Upper lobe of right lung (tissue), 1 donor: ENCODE measurements at regions of chr12 and their contacts with region 1.

Region 1: DNA sequence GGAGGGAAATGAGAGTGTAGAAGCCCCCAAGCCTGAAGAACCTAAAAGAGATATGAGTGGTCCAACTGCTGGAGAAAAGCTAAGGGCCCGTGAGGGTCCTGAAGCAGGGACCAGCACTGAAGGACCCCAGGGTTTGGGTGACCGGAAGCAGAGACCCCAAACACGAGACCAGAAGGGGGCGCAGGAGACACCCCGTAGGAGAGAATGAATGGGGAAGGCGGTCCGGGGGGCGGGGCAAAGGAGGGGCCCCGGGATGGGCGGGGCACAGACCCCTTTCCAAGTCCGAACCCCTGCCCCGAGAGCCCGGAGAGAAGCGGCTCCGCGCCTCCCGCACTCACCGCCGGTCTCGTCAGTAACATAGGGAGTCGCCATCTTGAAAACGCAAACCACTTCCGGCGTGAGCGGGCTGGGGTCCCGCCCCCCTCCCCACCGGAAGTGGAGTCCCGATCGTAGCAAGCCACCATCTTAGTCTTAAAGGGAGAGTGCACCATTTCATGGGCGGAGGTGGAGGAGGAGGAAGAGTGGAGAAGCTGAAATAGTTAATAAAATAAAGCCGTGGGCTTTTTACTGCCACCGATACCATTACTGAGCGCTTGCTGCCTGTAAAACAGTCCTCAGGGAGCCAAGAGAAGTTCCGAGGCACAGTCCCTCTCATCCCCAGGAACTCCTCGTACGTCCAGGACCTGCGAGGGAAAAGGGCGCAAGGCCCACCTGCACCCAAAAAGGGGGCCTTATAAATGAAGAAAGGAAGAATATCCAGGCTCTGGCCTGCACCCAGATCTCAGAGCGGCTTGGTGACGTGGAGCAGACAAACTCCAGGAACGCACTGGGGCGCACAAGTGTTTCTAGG is 731 bp downstream of the PYM1 start:
- DNase-seq: peak; percentile 92
- ATAC-seq: peak; percentile 88
- H3K4me3 ChIP-seq: peak overlapping the region; percentile 97
- H3K27ac ChIP-seq: peak overlapping the region; percentile 98
- H3K4me1 ChIP-seq: peaks cover 38% of the 10 kb centered on the region
- H3K27me3 ChIP-seq: no peaks in the 10 kb centered on the region
- CTCF ChIP-seq: peak; percentile 61

Region 2: GRCh38 chr12:55829967-55830600 is 96.9 kb before region 1 on chr12:
- intact Hi-C with region 1: loop called (anchors 10 kb)
- DNase-seq: peak; percentile 84
- ATAC-seq: peak; percentile 39
- H3K4me3 ChIP-seq: peak overlapping the region; percentile 82
- H3K27ac ChIP-seq: peak overlapping the region; percentile 90
- H3K4me1 ChIP-seq: peaks cover 46% of the 10 kb centered on the region
- H3K27me3 ChIP-seq: no peaks in the 10 kb centered on the region
- CTCF ChIP-seq: no peak

Region 3: DNA sequence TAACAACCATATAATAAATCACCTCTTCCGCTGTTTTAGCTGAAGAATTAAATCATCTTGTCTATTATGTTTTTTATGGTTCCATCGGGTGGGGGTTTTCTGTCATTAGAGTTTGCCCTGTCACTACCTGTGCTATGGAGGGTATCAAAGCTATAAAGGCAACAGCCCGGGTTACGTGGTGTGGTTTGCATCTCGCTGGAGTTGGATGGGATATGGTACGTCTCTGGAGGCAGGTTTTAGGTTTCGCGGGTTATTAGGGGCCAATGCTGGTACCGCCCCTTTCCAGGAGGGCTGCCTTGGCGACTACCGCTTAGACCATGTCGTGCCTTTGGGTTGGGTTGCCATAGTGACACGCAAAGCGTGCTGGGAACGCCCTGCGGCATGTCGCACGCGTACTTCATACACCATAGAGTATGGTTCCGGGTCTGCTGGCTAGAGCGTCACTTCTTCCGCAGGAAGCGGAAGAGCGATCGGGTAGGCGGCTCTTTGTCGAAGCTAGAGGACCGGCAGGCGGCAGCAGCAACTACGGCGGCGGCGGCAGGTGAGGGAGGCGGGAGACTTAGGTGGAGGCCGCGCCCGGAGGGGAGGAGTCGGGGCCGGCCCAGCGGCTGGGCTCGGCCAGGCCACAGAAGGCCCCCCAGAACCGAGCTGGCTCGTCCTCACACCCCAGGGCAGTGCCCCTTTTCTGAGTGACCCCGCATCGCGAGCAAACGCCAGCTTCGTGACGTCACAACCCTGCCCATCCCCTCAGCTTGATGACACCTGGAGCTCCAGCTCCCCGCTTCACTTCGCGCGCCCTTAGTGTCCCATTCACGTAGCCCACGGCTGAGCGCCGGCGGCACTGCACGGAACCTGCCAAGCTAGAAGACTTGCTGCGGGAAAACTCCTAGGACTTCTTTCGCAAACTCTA is 191.1 kb after region 1 on chr12 and contains the start of gene ZC3H10:
- intact Hi-C with region 1: no loop called
- DNase-seq: peak; percentile 98
- ATAC-seq: peak; percentile 92
- H3K4me3 ChIP-seq: peak within 1 kb of the TSS; percentile 62
- H3K27ac ChIP-seq: peak within 1 kb of the TSS; percentile 97
- H3K4me1 ChIP-seq: peaks cover 19% of the 10 kb centered on the region
- H3K27me3 ChIP-seq: no peaks in the 10 kb centered on the region
- CTCF ChIP-seq: peak; percentile 57
- total RNA-seq, gene ZC3H10: 8.4 TPM